Dendritic cell treated with granulocyte-macrophage colony-stimulating factor and Interleukin-4, amounts not matched to agents 40 ng/mL and 50 ng/mL, for 4 days (primary cell): ENCODE measurements at regions of chr4 and their contacts with region 1.

Region 1: GRCh38 chr4:16264798-16265197 is 38.5 kb upstream of the TAPT1 start:
- H3K4me3 Mint-ChIP-seq: no peak overlapping the region
- H3K27ac Mint-ChIP-seq: no peak overlapping the region
- H3K4me1 Mint-ChIP-seq: peaks cover 57% of the 10 kb centered on the region
- H3K27me3 Mint-ChIP-seq: no peaks in the 10 kb centered on the region

Region 2: DNA sequence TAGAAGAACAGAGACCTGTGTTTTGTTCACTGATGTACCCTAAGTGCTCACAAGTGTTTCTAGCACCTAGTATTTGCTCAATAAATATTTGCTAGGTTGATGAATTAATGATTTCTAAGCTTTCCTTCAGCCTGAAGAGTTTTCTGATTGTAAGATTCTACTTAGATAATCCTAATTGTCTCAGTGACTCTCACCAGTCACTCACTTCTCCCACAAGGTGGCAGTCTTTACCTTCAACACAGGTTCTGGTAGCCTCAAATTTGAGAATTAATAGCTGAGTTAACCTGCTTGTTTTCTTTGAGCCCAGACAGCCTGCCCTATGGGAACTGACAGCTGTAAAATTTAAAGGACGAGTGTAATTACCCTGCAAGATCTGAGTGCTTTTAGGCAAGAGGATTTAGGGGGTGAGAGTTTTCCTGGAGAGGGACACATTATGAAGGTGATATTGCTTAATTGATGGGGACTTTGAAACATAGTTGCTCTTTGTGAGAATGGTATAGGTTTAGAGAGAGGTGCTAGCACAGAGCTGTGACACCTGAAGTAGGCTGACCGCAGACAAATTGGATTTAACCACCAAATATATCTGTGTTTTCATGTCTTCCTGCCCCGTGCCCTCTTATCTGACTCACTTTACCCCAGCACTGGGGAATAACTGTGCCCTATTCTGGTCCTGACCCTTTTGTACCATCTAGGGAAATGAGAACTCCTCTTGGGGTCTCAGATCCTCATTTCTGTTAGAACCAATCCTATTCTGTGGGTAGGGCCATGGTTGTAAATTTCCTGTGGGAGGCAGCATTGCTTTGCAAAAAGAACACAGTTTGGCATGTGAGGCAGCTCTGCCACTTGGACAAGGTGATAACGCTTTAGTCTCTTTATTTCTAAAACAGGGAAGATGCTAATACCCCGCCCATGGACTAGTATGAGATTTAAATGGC is 458.9 kb before region 1 on chr4:
- intact Hi-C with region 1: loop called (anchors 10 kb)
- H3K4me3 Mint-ChIP-seq: no peak overlapping the region
- H3K27ac Mint-ChIP-seq: peak overlapping the region; percentile 43
- H3K4me1 Mint-ChIP-seq: peaks cover 48% of the 10 kb centered on the region
- H3K27me3 Mint-ChIP-seq: no peaks in the 10 kb centered on the region

Region 3: GRCh38 chr4:16026160-16026761 is 238.5 kb before region 1 on chr4:
- intact Hi-C with region 1: loop called (anchors 1 kb)
- H3K4me3 Mint-ChIP-seq: no peak overlapping the region
- H3K27ac Mint-ChIP-seq: no peak overlapping the region
- H3K4me1 Mint-ChIP-seq: peaks cover 6% of the 10 kb centered on the region
- H3K27me3 Mint-ChIP-seq: no peaks in the 10 kb centered on the region

Region 4: GRCh38 chr4:16196478-16197393 is 68.1 kb before region 1 on chr4:
- intact Hi-C with region 1: loop called (anchors 1 kb)
- H3K4me3 Mint-ChIP-seq: no peak overlapping the region
- H3K27ac Mint-ChIP-seq: peak overlapping the region; percentile 76
- H3K4me1 Mint-ChIP-seq: peaks cover 34% of the 10 kb centered on the region
- H3K27me3 Mint-ChIP-seq: no peaks in the 10 kb centered on the region

Region 5: GRCh38 chr4:16225863-16226815 is 38.7 kb before region 1 on chr4 and contains the start of gene TAPT1:
- intact Hi-C with region 1: loop called (anchors 5 kb)
- H3K4me3 Mint-ChIP-seq: peak within 1 kb of the TSS; percentile 91
- H3K27ac Mint-ChIP-seq: peak within 1 kb of the TSS; percentile 95
- H3K4me1 Mint-ChIP-seq: peaks cover 40% of the 10 kb centered on the region
- H3K27me3 Mint-ChIP-seq: no peaks in the 10 kb centered on the region

Region 6: DNA sequence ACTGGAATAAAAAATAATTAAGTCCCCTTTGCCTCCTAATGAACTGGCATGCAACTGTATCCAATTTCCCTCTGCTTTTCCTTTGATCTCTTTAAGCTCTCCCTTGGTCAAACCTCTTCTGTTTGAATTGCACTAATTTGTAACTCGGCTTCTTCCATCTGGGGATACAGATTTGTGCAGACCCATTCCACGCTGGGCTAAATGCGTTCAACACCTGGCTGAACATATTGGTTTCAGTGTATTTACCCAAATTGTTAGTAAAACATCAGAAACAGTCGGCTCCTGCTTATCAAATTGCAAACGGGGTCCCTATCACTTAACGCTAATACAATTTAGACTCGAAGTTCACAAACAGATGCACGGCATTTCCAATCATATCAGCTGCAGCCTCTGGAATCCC is 86.4 kb after region 1 on chr4:
- intact Hi-C with region 1: no loop called
- H3K4me3 Mint-ChIP-seq: no peak overlapping the region
- H3K27ac Mint-ChIP-seq: no peak overlapping the region
- H3K4me1 Mint-ChIP-seq: no peaks in the 10 kb centered on the region
- H3K27me3 Mint-ChIP-seq: peaks cover 1% of the 10 kb centered on the region

Region 7: DNA sequence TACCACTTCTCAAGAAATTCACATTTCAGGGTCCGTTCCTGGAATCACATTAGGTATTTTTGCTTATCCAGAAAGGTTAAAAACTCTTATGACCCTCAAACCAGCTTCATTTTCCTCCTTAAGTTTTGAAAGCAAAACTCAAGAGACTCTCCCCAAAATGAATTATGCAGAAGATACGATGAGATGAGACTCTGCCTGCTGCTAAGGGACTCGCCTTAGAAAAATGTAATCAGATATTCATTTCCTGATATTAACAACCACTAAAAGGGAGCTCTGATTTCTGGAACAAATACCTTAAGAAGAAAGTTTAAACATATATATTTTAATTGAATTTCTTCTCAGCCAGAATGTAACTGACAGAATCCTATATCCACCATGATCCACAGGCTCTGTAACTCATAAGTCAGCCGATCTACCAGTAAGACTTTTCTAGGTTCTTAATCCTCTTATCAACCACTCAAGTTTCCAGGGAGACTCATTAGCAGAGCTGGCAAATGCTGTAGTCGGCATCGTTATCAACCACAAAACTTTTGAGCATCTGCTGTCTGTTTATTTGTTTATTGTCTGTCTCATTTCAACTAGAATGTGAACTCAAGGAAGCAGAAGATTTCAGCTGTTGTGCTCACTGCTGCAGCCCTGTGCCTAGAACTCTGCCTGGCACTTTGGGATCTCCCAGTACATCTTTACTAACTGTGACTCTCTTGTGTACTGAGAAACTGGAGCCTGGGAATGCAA is 521.2 kb after region 1 on chr4:
- intact Hi-C with region 1: no loop called
- H3K4me3 Mint-ChIP-seq: no peak overlapping the region
- H3K27ac Mint-ChIP-seq: no peak overlapping the region
- H3K4me1 Mint-ChIP-seq: no peaks in the 10 kb centered on the region
- H3K27me3 Mint-ChIP-seq: no peaks in the 10 kb centered on the region